ENCODE measurements at regions of chr12 and their contacts with region 1.

Region 1: GRCh38 chr12:131351319-131352028 is 359.4 kb upstream of the SFSWAP start:
- DNase-seq: peak; percentile 69 to 93 (median 92)
- ATAC-seq: peak; percentile 91
- H3K4me3 ChIP-seq: peak overlapping the region; percentile 20; the same call in 1 of the 2 replicates
- H3K27ac ChIP-seq: peak overlapping the region; percentile 93
- H3K4me1 ChIP-seq: peaks cover 40 to 43% of the 10 kb centered on the region in 2 experiments
- H3K27me3 ChIP-seq: no peaks in the 10 kb centered on the region
- CTCF ChIP-seq: no peak
- EP300 ChIP-seq: no peak
- POLR2A ChIP-seq: 0 out of 2 replicates have a peak, but pooled peaks have one; percentile 20
- RAD21 ChIP-seq: no peak

Region 2: DNA sequence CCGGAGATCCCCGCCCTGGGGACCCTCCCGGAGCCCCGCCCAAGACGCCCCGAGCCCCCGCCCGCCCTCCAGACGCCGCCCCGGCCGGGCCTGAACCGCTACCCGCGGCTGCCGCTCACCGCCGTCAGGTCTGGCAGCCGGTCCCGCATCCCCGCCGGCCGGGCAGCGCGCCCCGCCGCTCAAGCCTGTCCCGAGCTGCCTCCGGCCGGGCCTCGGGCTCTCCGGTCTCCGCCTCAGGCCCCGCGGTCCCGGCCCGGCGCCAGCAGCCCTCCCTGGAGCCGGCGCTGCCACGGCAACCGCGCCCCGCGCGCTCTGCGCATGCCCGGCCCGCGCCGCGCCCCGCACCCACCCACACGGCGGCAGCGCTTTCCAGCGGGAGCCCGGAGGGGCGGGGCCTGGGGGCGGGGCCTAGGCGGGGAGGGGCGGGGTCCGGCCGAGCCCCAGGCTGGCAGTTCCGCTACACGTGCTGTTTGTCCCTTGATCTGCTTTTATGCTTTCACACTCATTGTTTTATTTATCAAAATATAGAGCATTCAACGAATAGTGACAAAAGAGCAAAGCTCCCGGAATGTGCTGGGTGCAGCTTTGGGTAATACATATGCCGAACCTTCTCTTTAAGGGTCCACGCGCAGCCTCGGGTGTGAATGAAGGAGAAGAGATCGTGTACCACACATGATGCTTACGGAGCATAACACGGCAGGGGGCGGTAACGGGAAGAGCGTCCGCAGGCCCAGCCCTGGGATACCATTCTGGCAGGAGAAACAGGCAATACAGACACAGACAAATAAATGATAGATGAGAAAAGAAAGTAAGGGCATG is 512.3 kb before region 1 on chr12 and contains the start of gene STX2:
- CTCF ChIA-PET with region 1: no interaction called
- POLR2A ChIA-PET with region 1: no interaction called
- in situ Hi-C with region 1: no loop called
- intact Hi-C with region 1: loop called (anchors 10 kb)
- DNase-seq: peak; percentile 89 to 97 (median 96)
- ATAC-seq: peak; percentile 82
- H3K4me3 ChIP-seq: peak within 1 kb of the TSS; percentile 69
- H3K27ac ChIP-seq: peak within 1 kb of the TSS; percentile 72
- H3K4me1 ChIP-seq: peaks cover 33% of the 10 kb centered on the region in 2 experiments
- H3K27me3 ChIP-seq: no peaks in the 10 kb centered on the region
- CTCF ChIP-seq: peak; percentile 63 to 69 (median 65)
- EP300 ChIP-seq: peak; percentile 21; the same call in 1 of the 2 replicates
- POLR2A ChIP-seq: peak; percentile 52; the same call in 1 of the 2 replicates
- RAD21 ChIP-seq: peak; percentile 45 to 69
- polyA plus RNA-seq, gene STX2: 22.2 to 24.7 TPM

Region 3: GRCh38 chr12:131229426-131230339 is 121.8 kb before region 1 on chr12:
- CTCF ChIA-PET with region 1: no interaction called
- POLR2A ChIA-PET with region 1: no interaction called
- in situ Hi-C with region 1: no loop called
- intact Hi-C with region 1: loop called (anchors 10 kb)
- DNase-seq: peak; percentile 81 to 93 (median 86)
- ATAC-seq: peak; percentile 85
- H3K4me3 ChIP-seq: peak overlapping the region; percentile 23
- H3K27ac ChIP-seq: peak overlapping the region; percentile 93
- H3K4me1 ChIP-seq: peaks cover 40 to 55% of the 10 kb centered on the region in 2 experiments
- H3K27me3 ChIP-seq: no peaks in the 10 kb centered on the region
- CTCF ChIP-seq: peak; percentile 1 to 55 (median 15); a peak in 3 of 6 replicates
- EP300 ChIP-seq: peak; percentile 86
- POLR2A ChIP-seq: peak; percentile 71
- RAD21 ChIP-seq: no peak

Region 4: DNA sequence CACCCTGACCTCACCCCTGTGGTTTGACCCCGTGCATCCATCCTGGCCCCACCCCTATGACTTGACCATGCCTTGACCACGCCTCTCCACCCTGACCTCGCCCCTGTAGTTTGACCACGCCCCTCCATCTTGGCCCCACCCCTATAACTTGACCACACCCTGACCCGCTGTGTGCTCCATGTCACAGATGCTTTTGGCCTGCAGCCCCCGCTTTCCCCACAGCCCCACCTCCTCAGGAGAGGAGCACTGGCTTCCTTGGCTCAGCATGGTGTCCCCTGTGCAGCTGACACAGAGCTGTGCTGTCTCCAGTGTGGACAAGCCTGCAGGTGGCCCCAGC is 89.6 kb after region 1 on chr12:
- CTCF ChIA-PET with region 1: no interaction called
- POLR2A ChIA-PET with region 1: no interaction called
- in situ Hi-C with region 1: no loop called
- intact Hi-C with region 1: loop called (anchors 1 kb)
- DNase-seq: peak; percentile 95 to 97 (median 96)
- ATAC-seq: no peak; the same call in 2 of the 3 replicates
- H3K4me3 ChIP-seq: no peak overlapping the region
- H3K27ac ChIP-seq: peak overlapping the region; percentile 62
- H3K4me1 ChIP-seq: peaks cover 16 to 56% of the 10 kb centered on the region in 2 experiments; a peak in 4 of 5 replicates
- H3K27me3 ChIP-seq: no peaks in the 10 kb centered on the region
- CTCF ChIP-seq: no peak; a peak in 1 of 6 replicates
- EP300 ChIP-seq: no peak
- POLR2A ChIP-seq: no peak
- RAD21 ChIP-seq: no peak